AG04449 (cell line): ENCODE measurements at regions of chr3 and their contacts with region 1.

Region 1: DNA sequence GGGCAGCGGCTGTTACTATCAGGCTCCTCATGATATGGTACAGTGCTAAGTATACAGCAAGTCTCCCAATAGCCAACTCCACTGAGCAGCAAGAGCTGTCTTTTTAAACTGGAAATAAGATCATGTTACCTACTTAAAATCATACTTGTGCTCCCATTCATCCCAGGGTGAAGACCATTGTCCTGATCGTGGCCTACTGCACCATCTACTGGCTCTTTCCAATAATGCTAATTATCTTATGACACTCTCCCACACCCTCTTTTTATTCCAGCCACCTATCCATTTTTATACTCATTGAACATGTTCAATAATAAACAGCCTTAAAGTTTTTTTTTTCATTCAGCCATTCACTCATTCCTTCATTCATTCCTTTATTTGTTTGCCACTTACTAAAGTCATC is 117.7 kb downstream of the GBE1 start:
- DNase-seq: peak; percentile 5
- H3K4me3 ChIP-seq: no peak overlapping the region
- CTCF ChIP-seq: peak; percentile 12

Region 2: GRCh38 chr3:81302045-81302444 is 341.7 kb before region 1 on chr3:
- CTCF ChIA-PET with region 1: interaction called, 14 read pairs
- POLR2A ChIA-PET with region 1: interaction called, 4 read pairs
- DNase-seq: no peak
- H3K4me3 ChIP-seq: no peak overlapping the region
- CTCF ChIP-seq: peak; percentile 74

Region 3: DNA sequence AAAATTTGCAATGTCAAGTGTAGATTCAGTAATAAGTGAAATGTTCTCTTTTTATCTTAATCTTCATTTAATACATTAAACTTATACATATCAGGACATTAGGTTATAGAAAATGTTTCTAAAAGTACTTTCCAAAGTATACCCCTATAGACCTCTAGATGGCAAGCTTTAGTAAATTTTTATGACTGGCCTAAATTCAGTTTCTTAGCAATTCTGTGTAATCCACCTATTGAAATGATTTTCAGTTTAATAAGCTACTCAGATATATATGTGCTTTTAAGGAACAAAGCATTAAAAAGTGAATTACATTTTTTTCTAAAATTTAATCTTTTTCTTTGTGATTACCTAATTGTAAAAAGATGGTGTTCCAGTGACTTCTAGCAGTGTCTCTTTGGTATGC is 224.5 kb before region 1 on chr3:
- CTCF ChIA-PET with region 1: interaction called, 29 read pairs
- POLR2A ChIA-PET with region 1: no interaction called
- DNase-seq: no peak
- H3K4me3 ChIP-seq: no peak overlapping the region
- CTCF ChIP-seq: peak; percentile 17

Region 4: DNA sequence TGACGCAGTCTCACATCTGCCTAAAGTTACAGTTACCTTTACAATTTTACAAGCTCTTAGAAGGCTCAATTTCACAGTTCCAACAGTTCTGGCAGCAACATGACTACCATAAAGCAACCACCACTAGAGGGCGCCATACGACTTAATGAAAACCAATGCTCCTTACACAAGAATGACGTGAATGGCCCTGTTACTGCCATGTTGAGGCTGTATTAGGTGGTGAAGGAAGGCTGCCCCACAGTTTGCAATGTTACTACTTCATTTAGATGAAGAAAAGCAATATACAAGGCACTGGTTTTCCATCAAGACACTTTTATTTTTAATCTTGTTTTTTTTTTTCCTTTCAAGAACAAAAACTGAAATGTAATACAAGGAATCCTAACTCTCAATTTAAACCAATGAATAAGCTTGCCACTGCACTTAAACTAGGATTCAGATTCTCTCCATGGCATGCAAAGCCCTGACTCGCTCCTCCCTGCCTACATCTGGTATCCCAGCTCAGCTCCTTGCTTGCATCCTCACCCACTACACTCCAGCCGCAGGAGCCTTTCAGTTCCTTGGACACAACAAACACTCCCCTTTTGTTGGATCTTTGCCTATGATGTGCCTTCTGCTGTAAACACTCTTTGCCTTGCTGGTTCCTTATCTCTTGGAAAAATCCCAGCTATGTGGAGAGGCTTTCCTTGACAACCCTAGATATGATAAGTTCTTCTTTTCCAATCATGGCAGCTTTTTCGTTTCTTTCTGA is 153.0 kb before region 1 on chr3:
- CTCF ChIA-PET with region 1: interaction called, 21 read pairs
- POLR2A ChIA-PET with region 1: no interaction called
- DNase-seq: no peak
- H3K4me3 ChIP-seq: no peak overlapping the region
- CTCF ChIP-seq: peak; percentile 62

Region 5: GRCh38 chr3:81581966-81582599 is 61.6 kb before region 1 on chr3:
- CTCF ChIA-PET with region 1: interaction called, 38 read pairs
- POLR2A ChIA-PET with region 1: no interaction called
- DNase-seq: no peak
- H3K4me3 ChIP-seq: no peak overlapping the region
- CTCF ChIP-seq: peak; percentile 70